Activated CD4-positive, alpha-beta memory T cell treated with anti-CD3 and anti-CD28 coated beads, Interleukin-2, amount 10 ng/mL, durations not matched to agents 7 days and 5 days (primary cell): ENCODE measurements at regions of chr13 and their contacts with region 1.

Region 1: DNA sequence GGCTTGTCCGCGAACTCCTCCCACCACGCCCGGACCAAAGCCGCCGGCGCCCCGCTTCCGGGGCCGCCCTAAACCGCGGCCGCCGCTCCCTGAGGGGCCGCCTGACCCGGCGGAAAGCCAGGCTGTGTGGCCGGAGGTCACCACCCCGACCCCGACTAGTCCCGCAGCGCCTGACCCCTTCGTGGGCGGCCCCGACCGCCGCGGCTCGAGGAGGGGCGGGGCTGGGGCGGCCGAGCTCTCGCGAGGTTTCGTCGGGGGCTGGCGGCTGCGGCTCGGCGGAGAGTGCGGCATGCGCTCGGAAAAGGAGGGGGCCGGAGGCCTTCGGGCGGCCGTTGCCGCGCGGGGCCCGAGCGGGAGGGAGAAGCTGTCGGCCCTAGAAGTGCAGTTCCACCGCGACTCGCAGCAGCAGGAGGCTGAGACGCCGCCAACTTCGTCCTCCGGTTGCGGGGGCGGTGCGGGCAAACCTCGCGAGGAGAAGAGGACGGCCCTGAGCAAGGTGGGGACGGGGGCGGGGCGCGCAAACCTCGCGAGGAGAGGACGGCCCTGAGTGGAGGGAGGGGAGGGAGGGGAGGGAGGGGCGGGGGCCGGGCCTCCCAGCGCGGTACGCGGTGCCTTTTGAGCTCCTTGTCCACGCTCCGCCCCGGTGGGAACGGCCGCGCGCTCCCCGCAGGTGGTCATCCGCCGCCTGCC is at the start of gene UPF3A:
- DNase-seq: peak; percentile 90
- H3K4me3 Mint-ChIP-seq: peak within 1 kb of the TSS; percentile 77
- H3K27ac Mint-ChIP-seq: peak within 1 kb of the TSS; percentile 94
- H3K4me1 Mint-ChIP-seq: peaks cover 46% of the 10 kb centered on the region
- H3K27me3 Mint-ChIP-seq: no peaks in the 10 kb centered on the region
- total RNA-seq, gene UPF3A: 46.2 to 52.8 TPM

Region 2: GRCh38 chr13:114099191-114099590 is 182.3 kb before region 1 on chr13:
- CTCF ChIA-PET with region 1: no interaction called
- POLR2A ChIA-PET with region 1: no interaction called
- DNase-seq: no peak
- H3K4me3 Mint-ChIP-seq: no peak overlapping the region
- H3K27ac Mint-ChIP-seq: no peak overlapping the region
- H3K4me1 Mint-ChIP-seq: peaks cover 14% of the 10 kb centered on the region
- H3K27me3 Mint-ChIP-seq: no peaks in the 10 kb centered on the region

Region 3: DNA sequence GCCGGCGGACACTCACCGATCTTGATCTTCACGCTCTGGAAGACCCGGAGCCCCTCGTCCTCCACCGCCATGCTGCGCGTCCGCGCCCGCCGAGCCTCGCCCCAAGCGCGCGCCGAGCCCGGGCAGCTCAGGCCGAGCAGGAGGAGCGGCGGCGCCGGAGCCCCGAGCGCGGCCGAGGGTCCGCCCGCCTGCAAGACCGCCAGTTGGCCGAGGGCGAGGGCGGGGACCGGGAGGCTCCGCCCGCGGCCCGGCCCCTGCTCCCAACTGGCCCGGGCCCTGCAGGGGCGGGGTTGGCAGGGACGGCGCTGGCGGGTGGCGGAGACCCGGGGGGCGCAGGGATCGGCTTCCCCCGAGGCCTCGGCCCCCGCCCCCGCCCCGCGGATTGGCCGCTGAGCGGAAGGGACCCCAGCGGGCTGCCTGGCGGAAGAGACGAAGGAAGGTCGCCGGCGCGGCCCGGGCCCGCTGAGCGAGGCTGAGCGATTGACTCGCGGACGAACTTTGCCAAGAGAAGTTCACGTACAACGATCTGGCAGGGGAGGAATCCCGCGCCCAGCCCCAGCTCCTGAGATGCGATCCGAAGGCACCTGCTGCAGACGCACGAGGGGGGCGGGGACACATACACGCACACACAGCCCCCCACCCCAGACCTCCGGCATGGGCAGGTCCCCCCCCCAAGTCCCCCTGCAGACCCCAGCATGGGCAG is 148.9 kb before region 1 on chr13 and contains the start of gene RASA3:
- CTCF ChIA-PET with region 1: no interaction called
- POLR2A ChIA-PET with region 1: interaction called, 11 read pairs
- DNase-seq: peak; percentile 67
- H3K4me3 Mint-ChIP-seq: peak within 1 kb of the TSS; percentile 97
- H3K27ac Mint-ChIP-seq: peak within 1 kb of the TSS; percentile 92
- H3K4me1 Mint-ChIP-seq: peaks cover 60% of the 10 kb centered on the region
- H3K27me3 Mint-ChIP-seq: peaks cover 10% of the 10 kb centered on the region
- total RNA-seq, gene RASA3: 97.2 to 99.3 TPM

Region 4: GRCh38 chr13:114263578-114263977 is 17.9 kb before region 1 on chr13:
- CTCF ChIA-PET with region 1: no interaction called
- POLR2A ChIA-PET with region 1: interaction called, 59 read pairs
- DNase-seq: peak; percentile 37
- H3K4me3 Mint-ChIP-seq: peak overlapping the region; percentile 12
- H3K27ac Mint-ChIP-seq: peak overlapping the region; percentile 77
- H3K4me1 Mint-ChIP-seq: peaks cover 72% of the 10 kb centered on the region
- H3K27me3 Mint-ChIP-seq: no peaks in the 10 kb centered on the region

Region 5: GRCh38 chr13:114268344-114269280 is 12.9 kb before region 1 on chr13:
- CTCF ChIA-PET with region 1: interaction called, 5 read pairs
- POLR2A ChIA-PET with region 1: interaction called, 59 read pairs
- DNase-seq: peak; percentile 50
- H3K4me3 Mint-ChIP-seq: peak overlapping the region; percentile 56
- H3K27ac Mint-ChIP-seq: peak overlapping the region; percentile 78
- H3K4me1 Mint-ChIP-seq: peaks cover 49% of the 10 kb centered on the region
- H3K27me3 Mint-ChIP-seq: no peaks in the 10 kb centered on the region

Region 6: GRCh38 chr13:114314074-114314912 is 32.8 kb after region 1 on chr13 and contains the start of gene CHAMP1:
- CTCF ChIA-PET with region 1: interaction called, 5 read pairs
- POLR2A ChIA-PET with region 1: interaction called, 44 read pairs
- DNase-seq: peak; percentile 95
- H3K4me3 Mint-ChIP-seq: peak within 1 kb of the TSS; percentile 96
- H3K27ac Mint-ChIP-seq: peak within 1 kb of the TSS; percentile 85
- H3K4me1 Mint-ChIP-seq: peaks cover 46% of the 10 kb centered on the region
- H3K27me3 Mint-ChIP-seq: no peaks in the 10 kb centered on the region
- total RNA-seq, gene CHAMP1: 30.6 to 32.8 TPM